Heart right ventricle (tissue), 16 donors: ENCODE measurements at regions of chr3 and their contacts with region 1.

Region 1: GRCh38 chr3:63295816-63296215 is 17.7 kb downstream of the SYNPR start:
- DNase-seq: no peak
- ATAC-seq: no peak
- H3K4me3 ChIP-seq: no peak overlapping the region
- H3K27ac ChIP-seq: no peak overlapping the region
- H3K4me1 ChIP-seq: no peaks in the 10 kb centered on the region
- H3K27me3 ChIP-seq: no peaks in the 10 kb centered on the region
- CTCF ChIP-seq: no peak

Region 2: GRCh38 chr3:62405135-62405534 is 890.7 kb before region 1 on chr3:
- intact Hi-C with region 1: loop called in 1 of 10 experiments (anchors 5 kb)
- DNase-seq: no peak
- ATAC-seq: peak in 4 of 8 donors; percentile 44 to 68 (median 66)
- H3K4me3 ChIP-seq: no peak overlapping the region
- H3K27ac ChIP-seq: no peak overlapping the region
- H3K4me1 ChIP-seq: no peaks in the 10 kb centered on the region
- H3K27me3 ChIP-seq: peaks cover 0 to 7% (median 0%) of the 10 kb centered on the region in 7 donors
- CTCF ChIP-seq: no peak

Region 3: GRCh38 chr3:63167113-63167512 is 128.7 kb before region 1 on chr3:
- intact Hi-C with region 1: no loop called
- DNase-seq: no peak
- ATAC-seq: no peak
- H3K4me3 ChIP-seq: no peak overlapping the region
- H3K27ac ChIP-seq: no peak overlapping the region
- H3K4me1 ChIP-seq: no peaks in the 10 kb centered on the region
- H3K27me3 ChIP-seq: no peaks in the 10 kb centered on the region
- CTCF ChIP-seq: no peak